ENCODE measurements at regions of chr6 and their contacts with region 1.

Region 1: GRCh38 chr6:42043787-42044475 is 6.4 kb upstream of the TAF8 start:
- DNase-seq: peak; percentile 85 to 95 (median 91)
- ATAC-seq: peak; percentile 67
- H3K4me3 ChIP-seq: peak overlapping the region; percentile 59
- H3K4me3 Mint-ChIP-seq: peak overlapping the region; percentile 84 to 99 (median 95)
- H3K27ac ChIP-seq: peak overlapping the region; percentile 76
- H3K27ac Mint-ChIP-seq: peak overlapping the region; percentile 73 to 98 (median 94)
- H3K4me1 ChIP-seq: peaks cover 55 to 64% of the 10 kb centered on the region in 2 donors
- H3K4me1 Mint-ChIP-seq: peaks cover 53 to 89% (median 64%) of the 10 kb centered on the region in 7 donors
- H3K27me3 ChIP-seq: no peaks in the 10 kb centered on the region
- H3K27me3 Mint-ChIP-seq: no peaks in the 10 kb centered on the region

Region 2: GRCh38 chr6:41545703-41546474 is 498.0 kb before region 1 on chr6 and contains the start of gene FOXP4:
- CTCF ChIA-PET with region 1: no interaction called
- POLR2A ChIA-PET with region 1: no interaction called
- intact Hi-C with region 1: loop called (anchors 5 kb)
- DNase-seq: peak; percentile 45 to 83 (median 76)
- ATAC-seq: peak; percentile 95
- H3K4me3 ChIP-seq: peak within 1 kb of the TSS; percentile 64
- H3K4me3 Mint-ChIP-seq: peak within 1 kb of the TSS; percentile 91 to 96 (median 94)
- H3K27ac ChIP-seq: peak within 1 kb of the TSS; percentile 19
- H3K27ac Mint-ChIP-seq: peak within 1 kb of the TSS in 8 of 9 donors; percentile 7 to 86 (median 66)
- H3K4me1 ChIP-seq: peaks cover 20 to 27% of the 10 kb centered on the region in 2 donors
- H3K4me1 Mint-ChIP-seq: peaks cover 6 to 42% (median 25%) of the 10 kb centered on the region in 7 donors
- H3K27me3 ChIP-seq: peaks cover 2 to 9% of the 10 kb centered on the region in 2 donors
- H3K27me3 Mint-ChIP-seq: peaks cover 10 to 73% (median 16%) of the 10 kb centered on the region in 5 donors
- total RNA-seq, gene FOXP4: 3.1 to 7.6 (median 4.9) TPM

Region 3: GRCh38 chr6:41801380-41801779 is 242.6 kb before region 1 on chr6:
- CTCF ChIA-PET with region 1: interaction called, 3 read pairs
- POLR2A ChIA-PET with region 1: no interaction called
- intact Hi-C with region 1: loop called in 1 of 2 experiments (anchors 1 kb)
- DNase-seq: no peak
- ATAC-seq: no peak
- H3K4me3 ChIP-seq: no peak overlapping the region
- H3K4me3 Mint-ChIP-seq: no peak overlapping the region
- H3K27ac ChIP-seq: no peak overlapping the region
- H3K27ac Mint-ChIP-seq: no peak overlapping the region
- H3K4me1 ChIP-seq: no peaks in the 10 kb centered on the region
- H3K4me1 Mint-ChIP-seq: peaks cover 0 to 4% (median 0%) of the 10 kb centered on the region in 7 donors
- H3K27me3 ChIP-seq: no peaks in the 10 kb centered on the region
- H3K27me3 Mint-ChIP-seq: no peaks in the 10 kb centered on the region

Region 4: GRCh38 chr6:41920921-41921711 is 122.8 kb before region 1 on chr6 and contains the starts of genes BYSL and MED20:
- CTCF ChIA-PET with region 1: interaction called, 21 read pairs
- POLR2A ChIA-PET with region 1: interaction called, 22 read pairs
- intact Hi-C with region 1: loop called (anchors 1 kb)
- DNase-seq: peak; percentile 93 to 99 (median 96)
- ATAC-seq: peak; percentile 96
- H3K4me3 ChIP-seq: peak within 1 kb of the TSS; percentile 76
- H3K4me3 Mint-ChIP-seq: peak within 1 kb of the TSS; percentile 95 to 100 (median 99)
- H3K27ac ChIP-seq: peak within 1 kb of the TSS; percentile 95
- H3K27ac Mint-ChIP-seq: peak within 1 kb of the TSS; percentile 94 to 100 (median 99)
- H3K4me1 ChIP-seq: peaks cover 20 to 24% of the 10 kb centered on the region in 2 donors
- H3K4me1 Mint-ChIP-seq: peaks cover 27 to 58% (median 50%) of the 10 kb centered on the region in 7 donors
- H3K27me3 ChIP-seq: no peaks in the 10 kb centered on the region
- H3K27me3 Mint-ChIP-seq: peaks cover 0 to 3% (median 0%) of the 10 kb centered on the region in 5 donors
- total RNA-seq, gene BYSL: 3.9 to 35.7 (median 8.1) TPM
- total RNA-seq, gene MED20: 4.5 to 21.7 (median 9.4) TPM

Region 5: GRCh38 chr6:42021847-42022754 is 21.8 kb before region 1 on chr6:
- CTCF ChIA-PET with region 1: interaction called, 25 read pairs
- POLR2A ChIA-PET with region 1: interaction called, 14 read pairs
- intact Hi-C with region 1: loop called (anchors 1 kb)
- DNase-seq: peak in 8 of 9 donors; percentile 64 to 86 (median 77)
- ATAC-seq: peak; percentile 85
- H3K4me3 ChIP-seq: peak overlapping the region; percentile 23
- H3K4me3 Mint-ChIP-seq: peak overlapping the region; percentile 73 to 91 (median 80)
- H3K27ac ChIP-seq: peak overlapping the region; percentile 62
- H3K27ac Mint-ChIP-seq: peak overlapping the region; percentile 87 to 98 (median 95)
- H3K4me1 ChIP-seq: peaks cover 69 to 72% of the 10 kb centered on the region in 2 donors
- H3K4me1 Mint-ChIP-seq: peaks cover 59 to 94% (median 78%) of the 10 kb centered on the region in 7 donors
- H3K27me3 ChIP-seq: no peaks in the 10 kb centered on the region
- H3K27me3 Mint-ChIP-seq: no peaks in the 10 kb centered on the region

Region 6: GRCh38 chr6:42136508-42137193 is 92.7 kb after region 1 on chr6:
- CTCF ChIA-PET with region 1: no interaction called
- POLR2A ChIA-PET with region 1: no interaction called
- intact Hi-C with region 1: no loop called
- DNase-seq: no peak
- ATAC-seq: peak; percentile 36
- H3K4me3 ChIP-seq: no peak overlapping the region
- H3K4me3 Mint-ChIP-seq: peak overlapping the region in 1 of 10 donors; percentile 47
- H3K27ac ChIP-seq: no peak overlapping the region
- H3K27ac Mint-ChIP-seq: peak overlapping the region in 1 of 9 donors; percentile 21
- H3K4me1 ChIP-seq: no peaks in the 10 kb centered on the region
- H3K4me1 Mint-ChIP-seq: peaks cover 0 to 9% (median 6%) of the 10 kb centered on the region in 7 donors
- H3K27me3 ChIP-seq: no peaks in the 10 kb centered on the region
- H3K27me3 Mint-ChIP-seq: peaks cover 11 to 29% (median 13%) of the 10 kb centered on the region in 5 donors

Region 7: DNA sequence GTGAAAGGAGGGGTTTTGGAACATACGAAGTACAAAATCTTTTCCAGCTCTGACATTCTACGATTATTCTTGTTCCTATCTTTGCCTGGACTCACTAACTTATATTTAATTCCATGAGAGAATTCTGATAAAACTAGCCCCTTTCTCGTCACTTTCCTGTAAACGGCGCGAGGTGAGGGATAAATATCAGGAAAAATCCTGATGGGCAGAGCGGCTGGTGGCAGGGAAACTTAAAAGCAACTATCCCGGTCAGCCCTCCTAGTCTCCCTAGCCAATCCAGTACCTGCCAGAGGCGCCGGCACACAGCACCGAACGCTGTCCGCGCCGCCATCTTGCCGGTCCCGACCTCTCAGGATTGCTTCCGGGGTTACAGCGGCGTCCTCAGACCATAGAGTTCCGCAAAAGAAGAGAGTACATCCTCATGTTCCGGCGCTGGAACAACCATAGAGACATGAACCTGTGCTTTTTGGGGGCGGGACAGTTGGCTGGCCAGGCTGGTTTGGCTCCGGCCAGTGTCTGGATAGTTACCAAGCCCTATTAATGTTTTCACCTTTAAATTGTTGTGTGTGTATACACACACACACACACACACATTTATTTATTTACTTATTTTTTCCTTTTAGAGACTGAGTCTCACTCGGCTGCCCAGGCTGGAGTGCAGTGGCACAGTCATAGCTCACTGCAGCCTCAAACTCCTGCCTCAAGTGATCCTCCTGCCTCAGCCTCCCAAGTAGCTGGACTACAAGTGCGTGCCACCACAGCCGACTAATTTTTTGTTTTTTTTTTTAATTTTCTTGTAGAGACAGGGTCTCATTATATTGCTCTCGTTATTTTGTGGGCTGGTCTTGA is 173.8 kb after region 1 on chr6 and contains the start of gene MRPS10:
- CTCF ChIA-PET with region 1: interaction called, 3 read pairs
- POLR2A ChIA-PET with region 1: interaction called, 3 read pairs
- intact Hi-C with region 1: loop called in 1 of 2 experiments (anchors 2 kb)
- DNase-seq: peak; percentile 72 to 92 (median 87)
- ATAC-seq: peak; percentile 100
- H3K4me3 ChIP-seq: peak within 1 kb of the TSS; percentile 96
- H3K4me3 Mint-ChIP-seq: peak within 1 kb of the TSS; percentile 92 to 100 (median 98)
- H3K27ac ChIP-seq: peak within 1 kb of the TSS; percentile 77
- H3K27ac Mint-ChIP-seq: peak within 1 kb of the TSS; percentile 87 to 99 (median 97)
- H3K4me1 ChIP-seq: peaks cover 9 to 14% of the 10 kb centered on the region in 2 donors
- H3K4me1 Mint-ChIP-seq: peaks cover 7 to 34% (median 24%) of the 10 kb centered on the region in 7 donors
- H3K27me3 ChIP-seq: no peaks in the 10 kb centered on the region
- H3K27me3 Mint-ChIP-seq: no peaks in the 10 kb centered on the region
- total RNA-seq, gene MRPS10: 17.0 to 30.3 (median 25.3) TPM